ENCODE measurements at regions of chr19 and their contacts with region 1.

Region 1: GRCh38 chr19:55632463-55632834 is 8.1 kb upstream of the ZNF784 start:
- DNase-seq: peak; percentile 63 to 73
- ATAC-seq: peak; percentile 75 to 78 (median 76)
- H3K4me3 ChIP-seq: no peak overlapping the region
- H3K27ac ChIP-seq: peak overlapping the region; percentile 99
- H3K4me1 ChIP-seq: peaks cover 20% of the 10 kb centered on the region
- H3K27me3 ChIP-seq: no peaks in the 10 kb centered on the region
- CTCF ChIP-seq: peak; percentile 91

Region 2: DNA sequence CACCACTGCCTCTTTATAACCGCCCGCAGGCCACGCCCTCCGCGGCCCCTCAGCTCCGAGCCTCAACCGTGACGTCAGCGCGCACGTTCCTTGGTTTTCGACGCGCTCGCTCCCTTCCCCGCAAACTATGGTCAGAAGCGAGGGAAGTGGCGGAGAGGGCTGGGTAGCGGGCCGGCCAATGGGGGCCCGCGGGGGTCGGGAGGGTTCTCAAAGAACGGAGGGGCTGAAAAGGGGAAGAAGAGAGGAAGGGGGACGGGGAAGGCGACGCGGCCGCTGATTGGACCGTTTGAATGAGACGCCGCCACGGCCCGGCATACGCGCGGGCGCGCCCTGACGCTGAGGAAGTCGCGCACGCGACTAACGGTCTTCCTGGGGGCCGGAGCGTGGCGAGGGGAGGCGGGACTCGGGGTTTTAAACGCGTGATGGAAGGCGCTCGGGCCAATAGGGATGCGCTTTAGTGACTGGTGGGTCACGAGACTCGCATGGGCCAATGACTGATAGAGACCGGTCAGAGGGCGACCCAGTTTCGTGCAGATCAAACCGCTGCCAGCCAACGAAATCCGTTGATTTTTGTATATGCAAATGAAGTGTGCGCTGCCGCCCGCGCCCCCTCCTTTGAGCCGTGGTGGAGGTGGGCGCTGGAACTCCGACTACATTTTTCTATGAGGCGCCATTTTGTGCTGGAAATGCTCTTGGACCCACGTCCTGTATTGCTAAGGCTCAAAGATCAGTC is 224.5 kb before region 1 on chr19:
- intact Hi-C with region 1: no loop called
- DNase-seq: peak; percentile 98 to 99
- ATAC-seq: peak; percentile 95 to 97 (median 96)
- H3K4me3 ChIP-seq: peak overlapping the region; percentile 73
- H3K27ac ChIP-seq: peak overlapping the region; percentile 92
- H3K4me1 ChIP-seq: no peaks in the 10 kb centered on the region
- H3K27me3 ChIP-seq: no peaks in the 10 kb centered on the region
- CTCF ChIP-seq: no peak

Region 3: GRCh38 chr19:55467236-55468053 is 165.0 kb before region 1 on chr19:
- intact Hi-C with region 1: loop called (anchors 5 kb)
- DNase-seq: peak; percentile 74 to 83
- ATAC-seq: peak; percentile 83 to 93 (median 84)
- H3K4me3 ChIP-seq: no peak overlapping the region
- H3K27ac ChIP-seq: no peak overlapping the region
- H3K4me1 ChIP-seq: peaks cover under 1% of the 10 kb centered on the region
- H3K27me3 ChIP-seq: no peaks in the 10 kb centered on the region
- CTCF ChIP-seq: peak; percentile 99

Region 4: GRCh38 chr19:55809381-55810058 is 177.1 kb after region 1 on chr19:
- intact Hi-C with region 1: loop called in 1 of 2 experiments (anchors 5 kb)
- DNase-seq: peak in 1 of 2 donors; percentile 27
- ATAC-seq: no peak
- H3K4me3 ChIP-seq: no peak overlapping the region
- H3K27ac ChIP-seq: no peak overlapping the region
- H3K4me1 ChIP-seq: no peaks in the 10 kb centered on the region
- H3K27me3 ChIP-seq: no peaks in the 10 kb centered on the region
- CTCF ChIP-seq: no peak